CD14-positive monocyte (primary cell): ENCODE measurements at regions of chr21 and their contacts with region 1.

Region 1: DNA sequence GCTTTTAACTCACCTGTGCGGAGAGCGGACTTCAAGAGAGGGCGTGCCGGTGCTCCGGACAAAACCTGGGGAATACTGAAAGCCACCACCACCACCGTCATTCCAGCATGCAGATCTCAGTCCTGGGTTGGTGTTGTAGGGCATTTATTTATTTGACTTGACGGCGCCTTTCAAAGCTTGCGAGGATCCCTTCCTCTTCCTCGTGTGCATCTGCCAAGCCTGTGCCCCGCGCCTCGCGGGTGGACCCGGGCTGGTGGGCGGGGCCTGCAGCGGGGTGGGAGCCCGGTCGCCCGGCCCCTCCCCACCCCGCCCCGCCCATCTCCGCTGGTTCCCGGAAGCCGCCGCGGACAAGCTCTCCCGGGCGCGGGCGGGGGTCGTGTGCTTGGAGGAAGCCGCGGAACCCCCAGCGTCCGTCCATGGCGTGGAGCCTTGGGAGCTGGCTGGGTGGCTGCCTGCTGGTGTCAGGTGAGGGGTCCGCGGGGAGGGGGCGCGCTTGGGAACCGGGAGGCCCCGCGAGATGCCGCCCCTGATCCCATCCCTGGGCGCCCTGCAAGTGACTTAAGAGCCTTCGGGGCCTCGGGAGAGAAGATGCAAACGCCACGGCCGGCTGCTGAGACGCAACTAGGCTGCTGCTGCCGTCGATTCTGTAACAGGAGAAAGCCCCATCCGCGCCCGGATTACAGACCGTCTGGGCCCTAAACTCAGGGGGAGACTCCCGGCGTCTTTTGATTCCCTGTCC is at the start of gene IL10RB:
- DNase-seq: peak; percentile 76 to 87 (median 84)
- H3K4me3 ChIP-seq: peak within 1 kb of the TSS; percentile 64 to 88 (median 81)
- H3K4me3 Mint-ChIP-seq: peak within 1 kb of the TSS; percentile 98 to 99
- H3K27ac ChIP-seq: peak within 1 kb of the TSS; percentile 99 to 100
- H3K27ac Mint-ChIP-seq: peak within 1 kb of the TSS; percentile 98 to 100 (median 100)
- H3K4me1 ChIP-seq: peaks cover 83 to 96% of the 10 kb centered on the region in 2 donors
- H3K4me1 Mint-ChIP-seq: peaks cover 83% of the 10 kb centered on the region
- H3K27me3 ChIP-seq: no peaks in the 10 kb centered on the region
- H3K27me3 Mint-ChIP-seq: peaks cover 0 to 1% (median 0%) of the 10 kb centered on the region in 3 donors
- CTCF ChIP-seq: no peak
- polyA plus RNA-seq, gene IL10RB: 79.0 to 225 (median 212) TPM

Region 2: DNA sequence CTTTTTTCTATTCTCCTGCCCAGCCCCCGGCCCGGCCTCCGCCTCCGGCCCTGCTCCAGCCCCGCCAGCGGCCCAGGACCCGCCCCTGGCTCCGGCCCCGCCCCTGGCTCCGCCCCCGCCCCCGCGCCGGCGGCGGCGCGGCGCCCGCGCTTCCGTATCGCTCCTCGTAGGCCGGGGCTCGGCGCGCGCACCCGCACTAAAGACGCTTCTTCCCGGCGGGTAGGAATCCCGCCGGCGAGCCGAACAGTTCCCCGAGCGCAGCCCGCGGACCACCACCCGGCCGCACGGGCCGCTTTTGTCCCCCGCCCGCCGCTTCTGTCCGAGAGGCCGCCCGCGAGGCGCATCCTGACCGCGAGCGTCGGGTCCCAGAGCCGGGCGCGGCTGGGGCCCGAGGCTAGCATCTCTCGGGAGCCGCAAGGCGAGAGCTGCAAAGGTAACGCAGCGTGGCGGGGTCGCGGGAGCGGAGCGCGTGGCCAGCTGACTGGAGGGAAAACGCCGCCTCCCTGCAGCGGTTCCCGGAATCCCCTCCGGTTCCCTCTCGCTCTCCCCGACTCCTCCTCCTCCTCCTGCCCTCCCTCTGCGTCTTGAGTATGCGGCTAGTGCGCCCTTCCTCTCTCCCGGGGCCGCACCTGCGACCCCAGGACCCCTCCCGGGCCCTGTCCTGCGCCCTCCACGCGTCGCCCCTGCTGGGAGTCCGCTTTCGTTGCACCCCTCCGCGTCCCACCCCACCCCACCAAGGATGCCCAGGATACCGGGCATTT is 36.3 kb before region 1 on chr21 and contains the start of gene IFNAR2:
- intact Hi-C with region 1: loop called (anchors 5 kb)
- DNase-seq: peak; percentile 58 to 69 (median 64)
- H3K4me3 ChIP-seq: peak within 1 kb of the TSS; percentile 92 to 99 (median 97)
- H3K4me3 Mint-ChIP-seq: peak within 1 kb of the TSS; percentile 90 to 93
- H3K27ac ChIP-seq: peak within 1 kb of the TSS; percentile 88 to 95
- H3K27ac Mint-ChIP-seq: peak within 1 kb of the TSS; percentile 87 to 96 (median 92)
- H3K4me1 ChIP-seq: peaks cover 43 to 54% of the 10 kb centered on the region in 2 donors
- H3K4me1 Mint-ChIP-seq: peaks cover 49% of the 10 kb centered on the region
- H3K27me3 ChIP-seq: no peaks in the 10 kb centered on the region
- H3K27me3 Mint-ChIP-seq: peaks cover 0 to 3% (median under 1%) of the 10 kb centered on the region in 3 donors
- CTCF ChIP-seq: no peak
- polyA plus RNA-seq, gene IFNAR2: 47.7 to 79.8 (median 59.5) TPM

Region 3: DNA sequence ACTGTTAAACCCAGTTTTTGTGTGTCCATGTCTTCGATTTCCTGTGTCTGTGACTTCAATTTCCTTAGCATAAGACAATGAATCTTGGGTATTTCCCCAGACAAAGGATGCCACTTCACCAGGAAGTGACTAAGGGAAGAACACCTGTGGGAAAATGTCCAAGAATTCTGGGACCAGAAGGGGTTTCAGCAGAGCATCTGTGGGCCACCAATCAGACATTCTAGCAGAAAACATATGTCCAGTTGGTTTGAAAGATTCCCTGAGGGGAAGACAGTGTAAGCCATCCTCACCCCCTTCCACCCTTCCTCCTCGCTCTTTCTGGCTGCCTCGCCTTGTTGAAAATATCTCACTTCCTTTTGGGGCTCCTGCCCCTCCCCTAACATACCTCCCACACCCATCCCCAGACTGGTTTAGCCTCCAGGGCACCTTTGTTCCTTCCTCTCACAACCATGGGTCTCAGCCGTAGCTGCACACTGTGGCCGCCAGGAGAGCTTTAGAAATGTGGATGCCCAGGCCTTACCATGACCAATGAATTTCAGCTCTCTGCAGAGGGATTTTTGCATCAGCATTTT is 33.0 kb after region 1 on chr21:
- intact Hi-C with region 1: loop called in 1 of 2 experiments (anchors 2 kb)
- DNase-seq: peak; percentile 72 to 81 (median 79)
- H3K4me3 ChIP-seq: peak overlapping the region in 1 of 3 experiments; percentile 41
- H3K4me3 Mint-ChIP-seq: peak overlapping the region in 1 of 2 donors; percentile 68
- H3K27ac ChIP-seq: peak overlapping the region; percentile 87 to 95
- H3K27ac Mint-ChIP-seq: peak overlapping the region; percentile 94 to 99 (median 97)
- H3K4me1 ChIP-seq: peaks cover 64 to 73% of the 10 kb centered on the region in 2 donors
- H3K4me1 Mint-ChIP-seq: peaks cover 67% of the 10 kb centered on the region
- H3K27me3 ChIP-seq: no peaks in the 10 kb centered on the region
- H3K27me3 Mint-ChIP-seq: peaks cover 0 to 1% (median 0%) of the 10 kb centered on the region in 3 donors
- CTCF ChIP-seq: peak; percentile 59

Region 4: GRCh38 chr21:33324291-33325221 is 58.3 kb after region 1 on chr21 and contains the start of gene IFNAR1:
- intact Hi-C with region 1: loop called in 1 of 2 experiments (anchors 5 kb)
- DNase-seq: peak; percentile 98 to 99 (median 99)
- H3K4me3 ChIP-seq: peak within 1 kb of the TSS; percentile 83 to 94 (median 89)
- H3K4me3 Mint-ChIP-seq: no peak within 1 kb of the TSS
- H3K27ac ChIP-seq: peak within 1 kb of the TSS; percentile 99 to 100
- H3K27ac Mint-ChIP-seq: no peak within 1 kb of the TSS
- H3K4me1 ChIP-seq: peaks cover 30 to 43% of the 10 kb centered on the region in 2 donors
- H3K4me1 Mint-ChIP-seq: peaks cover 27% of the 10 kb centered on the region
- H3K27me3 ChIP-seq: no peaks in the 10 kb centered on the region
- H3K27me3 Mint-ChIP-seq: peaks cover 0 to 3% (median 0%) of the 10 kb centered on the region in 3 donors
- CTCF ChIP-seq: no peak
- polyA plus RNA-seq, gene IFNAR1: 16.8 to 95.3 (median 56.2) TPM